CD8-positive, alpha-beta T cell (primary cell): ENCODE measurements at regions of chr14 and their contacts with region 1.

Region 1: DNA sequence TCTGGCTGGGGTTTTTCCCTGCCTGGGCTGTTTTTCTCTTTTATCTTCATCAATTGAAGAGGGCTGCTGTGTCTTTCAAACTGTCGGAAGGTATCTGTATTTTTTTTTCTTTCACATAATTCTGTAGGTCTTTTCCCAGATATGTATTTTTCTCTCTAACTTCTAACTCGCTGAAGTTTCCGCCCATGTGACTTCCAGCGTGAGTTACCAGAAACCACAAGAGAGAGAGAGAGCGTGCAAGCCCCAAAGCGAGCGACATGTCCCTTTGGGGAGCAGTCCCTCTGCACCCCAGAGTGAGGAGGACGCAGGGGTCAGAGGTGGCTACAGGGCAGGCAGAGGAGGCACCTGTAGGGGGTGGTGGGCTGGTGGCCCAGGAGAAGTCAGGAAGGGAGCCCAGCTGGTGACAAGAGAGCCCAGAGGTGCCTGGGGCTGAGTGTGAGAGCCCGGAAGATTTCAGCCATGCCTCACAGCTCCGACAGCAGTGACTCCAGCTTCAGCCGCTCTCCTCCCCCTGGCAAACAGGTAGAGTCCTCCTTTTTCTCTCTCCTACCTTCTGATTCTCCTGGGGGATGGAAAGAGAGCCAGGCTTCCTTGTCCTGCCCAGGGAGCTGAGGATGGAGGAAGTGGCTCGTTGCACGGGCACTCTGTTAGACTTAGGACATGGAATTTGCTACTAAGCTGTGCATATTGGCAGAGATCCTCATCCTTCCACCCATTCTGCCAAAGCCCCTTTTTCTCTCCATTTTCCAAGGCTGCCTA is at the start of gene BATF:
- DNase-seq: peak; percentile 37 to 90 (median 73)
- ATAC-seq: peak; percentile 77
- H3K4me3 ChIP-seq: peak within 1 kb of the TSS; percentile 75 to 79
- H3K4me3 Mint-ChIP-seq: peak within 1 kb of the TSS; percentile 98
- H3K27ac ChIP-seq: peak within 1 kb of the TSS; percentile 46 to 93
- H3K27ac Mint-ChIP-seq: peak within 1 kb of the TSS; percentile 93
- H3K4me1 ChIP-seq: peaks cover 53% of the 10 kb centered on the region
- H3K4me1 Mint-ChIP-seq: peaks cover 66% of the 10 kb centered on the region
- H3K27me3 ChIP-seq: no peaks in the 10 kb centered on the region
- H3K27me3 Mint-ChIP-seq: no peaks in the 10 kb centered on the region
- CTCF ChIP-seq: no peak
- total RNA-seq, gene BATF: 3.2 to 4.3 TPM

Region 2: DNA sequence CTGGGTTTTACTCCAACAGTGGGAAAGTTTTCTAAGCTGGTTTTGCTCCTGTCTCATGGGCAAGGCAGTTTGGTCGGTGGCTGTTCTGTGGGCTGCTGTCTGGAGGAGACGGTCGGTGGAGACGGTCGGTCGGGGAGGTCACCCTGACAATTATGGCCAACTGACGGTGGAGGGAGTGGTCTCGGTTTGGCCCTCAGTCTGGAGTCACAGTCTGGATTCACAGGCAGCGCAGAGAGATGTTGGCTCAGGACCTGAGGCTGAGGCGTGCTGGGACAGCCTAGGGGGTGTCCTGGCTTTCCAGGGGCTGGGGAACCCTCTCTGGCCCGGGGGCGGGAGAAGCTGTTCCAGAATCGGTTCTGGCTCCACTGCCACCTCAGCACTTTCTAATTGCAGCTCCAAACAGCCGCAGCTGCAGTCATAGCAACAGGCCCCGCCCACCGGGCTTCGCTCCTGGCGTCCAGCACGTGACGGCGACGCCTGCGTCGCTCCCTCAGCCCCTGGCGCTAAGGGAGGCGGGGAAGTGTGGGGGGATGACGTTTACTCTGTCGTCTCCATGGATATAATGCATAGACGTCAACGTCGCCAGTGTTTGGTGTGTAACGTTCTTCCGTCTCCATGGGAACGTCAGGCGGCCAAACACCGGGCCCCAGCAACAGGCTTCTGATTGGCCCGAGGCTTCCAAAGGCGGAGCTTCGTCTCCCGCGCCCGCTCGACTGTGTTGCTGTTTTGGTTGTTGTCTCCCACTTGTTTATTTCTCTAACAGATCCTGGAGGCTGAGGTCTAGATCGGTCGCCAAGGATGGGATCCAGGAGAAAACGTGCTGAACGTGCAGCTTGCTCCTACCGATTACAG is 263.6 kb before region 1 on chr14:
- CTCF ChIA-PET with region 1: no interaction called
- POLR2A ChIA-PET with region 1: no interaction called
- intact Hi-C with region 1: loop called in 1 of 2 experiments (anchors 5 kb)
- DNase-seq: peak; percentile 97 to 100 (median 100)
- ATAC-seq: peak; percentile 89
- H3K4me3 ChIP-seq: peak overlapping the region; percentile 45 to 54
- H3K4me3 Mint-ChIP-seq: peak overlapping the region; percentile 82
- H3K27ac ChIP-seq: peak overlapping the region; percentile 92 to 98
- H3K27ac Mint-ChIP-seq: peak overlapping the region; percentile 97
- H3K4me1 ChIP-seq: peaks cover 17% of the 10 kb centered on the region
- H3K4me1 Mint-ChIP-seq: peaks cover 29% of the 10 kb centered on the region
- H3K27me3 ChIP-seq: no peaks in the 10 kb centered on the region
- H3K27me3 Mint-ChIP-seq: no peaks in the 10 kb centered on the region
- CTCF ChIP-seq: no peak